ENCODE measurements at regions of chr12 and their contacts with region 1.

Region 1: DNA sequence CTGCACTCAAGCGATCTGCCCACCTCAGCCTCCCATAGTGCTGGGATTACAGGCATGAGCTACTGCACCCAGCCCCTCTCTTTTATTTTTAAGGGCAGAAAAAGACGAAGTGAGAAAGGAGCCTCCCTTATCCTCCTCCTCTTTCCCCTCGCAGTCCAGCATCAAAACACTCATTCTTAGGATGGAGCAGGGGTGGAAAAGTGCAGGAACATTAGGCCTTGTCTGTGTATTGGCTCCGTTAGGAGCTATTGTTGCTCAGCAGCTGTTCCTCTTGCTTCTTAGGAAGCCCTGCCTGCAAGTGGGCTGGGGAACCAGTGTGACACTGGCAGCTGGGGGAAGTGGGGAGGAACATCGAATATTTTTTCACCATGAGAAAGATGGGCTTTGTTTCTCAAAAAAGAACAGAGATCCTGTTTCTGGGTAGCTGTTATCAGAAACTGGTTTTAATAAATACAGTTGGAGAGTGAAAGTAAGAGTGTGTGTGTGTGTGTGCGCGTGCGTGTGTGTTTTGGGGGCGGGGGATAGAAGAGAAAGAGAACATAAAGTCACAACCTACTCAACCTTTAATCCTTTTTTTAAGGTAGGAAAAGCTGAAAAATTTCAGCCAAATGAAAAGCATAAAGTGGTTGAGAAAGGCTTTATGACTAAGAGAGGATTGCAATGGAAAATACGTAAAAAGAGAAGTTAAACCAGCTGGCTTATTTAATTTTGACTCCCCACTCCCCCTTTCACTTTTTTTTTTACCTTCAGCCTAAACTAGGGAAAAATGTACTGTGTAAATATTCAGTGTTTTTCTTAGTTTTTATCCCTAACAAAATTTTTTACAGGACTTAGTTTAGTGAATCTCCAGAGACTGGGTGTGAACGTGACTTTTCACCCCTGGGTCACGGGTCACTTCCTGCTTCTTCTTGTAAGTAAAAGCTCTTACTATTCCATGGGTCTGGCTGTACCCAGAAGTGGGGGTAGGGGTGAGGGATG is 197.2 kb upstream of the PLEKHG7 start:
- DNase-seq: peak; percentile 36
- H3K4me3 Mint-ChIP-seq: peak overlapping the region; percentile 70
- H3K27ac Mint-ChIP-seq: peak overlapping the region; percentile 89
- H3K4me1 Mint-ChIP-seq: peaks cover 47% of the 10 kb centered on the region
- H3K27me3 Mint-ChIP-seq: no peaks in the 10 kb centered on the region

Region 2: DNA sequence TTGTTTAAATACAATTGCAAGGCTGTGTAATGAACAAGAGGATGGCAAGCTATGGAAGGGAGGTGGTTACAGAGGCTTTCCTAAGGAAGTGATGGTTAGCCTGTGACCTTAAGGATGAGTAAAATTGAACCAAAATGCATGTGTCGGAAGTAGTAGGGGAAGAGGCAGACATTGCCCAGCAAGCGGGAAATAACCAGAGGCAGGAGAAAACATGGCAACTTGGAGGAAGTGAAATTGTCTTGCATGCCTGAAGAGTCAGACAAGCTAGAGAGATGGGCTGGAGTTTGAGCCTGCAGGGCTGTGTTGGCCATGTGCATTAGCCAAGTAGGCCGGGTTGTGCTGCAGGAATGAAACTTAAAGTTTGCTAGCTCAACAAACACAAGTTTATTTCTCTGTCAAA is 456.1 kb before region 1 on chr12:
- intact Hi-C with region 1: loop called (anchors 10 kb)
- DNase-seq: no peak
- H3K4me3 Mint-ChIP-seq: no peak overlapping the region
- H3K27ac Mint-ChIP-seq: no peak overlapping the region
- H3K4me1 Mint-ChIP-seq: peaks cover 71% of the 10 kb centered on the region
- H3K27me3 Mint-ChIP-seq: no peaks in the 10 kb centered on the region

Region 3: GRCh38 chr12:92529944-92530343 is 24.4 kb after region 1 on chr12:
- intact Hi-C with region 1: loop called (anchors 1 kb)
- DNase-seq: no peak
- H3K4me3 Mint-ChIP-seq: no peak overlapping the region
- H3K27ac Mint-ChIP-seq: peak overlapping the region; percentile 54
- H3K4me1 Mint-ChIP-seq: peaks cover 24% of the 10 kb centered on the region
- H3K27me3 Mint-ChIP-seq: no peaks in the 10 kb centered on the region

Region 4: DNA sequence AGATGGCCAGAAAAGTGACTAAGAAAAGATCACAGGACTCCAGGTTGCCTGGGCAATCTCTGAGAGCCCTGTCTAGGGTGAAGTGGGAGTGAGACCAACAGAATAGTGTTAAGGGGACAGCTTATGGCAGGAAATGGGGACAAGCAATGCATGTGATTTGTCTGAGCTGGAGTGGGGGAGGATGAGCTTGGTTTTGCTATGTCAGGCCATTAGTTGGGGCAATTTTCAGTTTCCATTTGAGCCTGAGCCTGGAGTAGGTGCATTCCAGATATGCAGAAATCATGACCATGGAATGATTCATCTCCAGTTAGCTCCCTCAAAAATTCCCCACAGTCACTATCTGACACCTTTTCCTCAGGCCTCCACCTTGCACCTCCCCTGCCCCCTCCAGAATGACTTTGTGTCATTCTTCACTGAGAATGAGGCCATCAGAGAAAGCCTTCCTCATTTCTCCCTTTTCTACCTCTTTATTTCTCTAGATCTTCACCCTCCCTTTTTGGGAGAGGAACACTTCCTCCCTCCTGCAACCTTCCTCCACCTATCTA is 46.4 kb after region 1 on chr12:
- intact Hi-C with region 1: loop called (anchors 1 kb)
- DNase-seq: no peak
- H3K4me3 Mint-ChIP-seq: no peak overlapping the region
- H3K27ac Mint-ChIP-seq: no peak overlapping the region
- H3K4me1 Mint-ChIP-seq: peaks cover 32% of the 10 kb centered on the region
- H3K27me3 Mint-ChIP-seq: no peaks in the 10 kb centered on the region

Region 5: DNA sequence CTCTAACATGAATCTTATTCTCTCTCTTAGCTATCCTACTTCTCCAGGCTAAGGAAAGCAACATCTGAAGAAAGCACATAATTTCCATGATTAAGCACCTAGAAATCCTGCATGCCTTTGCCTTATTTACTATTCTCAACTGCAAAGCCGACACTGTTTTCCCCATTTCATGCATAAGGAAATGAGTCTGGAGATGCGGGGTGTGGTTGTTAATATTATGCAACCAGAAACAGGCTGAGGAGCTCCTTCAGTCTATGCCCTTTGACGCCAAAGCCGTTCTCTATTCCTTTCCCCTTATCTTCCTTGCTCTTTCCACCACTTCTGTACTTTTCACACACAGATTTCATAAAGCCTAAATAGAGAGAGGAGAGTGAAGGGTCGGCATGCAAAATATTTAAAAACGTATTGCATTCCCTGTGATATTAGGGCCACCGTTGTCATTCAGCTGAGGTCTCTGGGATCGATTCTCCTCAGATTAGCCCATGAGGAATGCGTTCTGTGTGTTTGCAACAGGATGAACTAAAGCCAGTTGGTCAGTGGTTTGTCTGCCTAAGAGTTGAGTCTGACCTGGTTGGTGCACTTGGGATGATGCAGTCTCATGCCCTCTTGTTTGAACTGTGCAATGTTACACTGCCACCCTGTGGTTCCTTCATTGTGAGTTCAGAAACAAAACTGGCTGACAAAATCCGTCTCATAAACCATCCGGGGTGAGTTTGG is 144.1 kb after region 1 on chr12:
- intact Hi-C with region 1: loop called (anchors 5 kb)
- DNase-seq: peak; percentile 21
- H3K4me3 Mint-ChIP-seq: no peak overlapping the region
- H3K27ac Mint-ChIP-seq: no peak overlapping the region
- H3K4me1 Mint-ChIP-seq: peaks cover 2% of the 10 kb centered on the region
- H3K27me3 Mint-ChIP-seq: peaks cover 15% of the 10 kb centered on the region

Measured in activated T-helper 2 cell treated with anti-CD3 and anti-CD28 coated beads, Interferon-gamma antibody, Interleukin-2, Interleukin-4, amounts not matched to agents 10 μg/mL and 5 μg/mL and 100 μg/mL, durations not matched to agents 14 hours and 24 hours and 36 hours (primary cell).